ENCODE measurements at regions of chr11 and their contacts with region 1.

Region 1: GRCh38 chr11:65251476-65251875 is 10.3 kb upstream of the POLA2 start:
- DNase-seq: no peak
- ATAC-seq: no peak
- H3K4me3 ChIP-seq: no peak overlapping the region
- H3K27ac ChIP-seq: no peak overlapping the region
- H3K4me1 ChIP-seq: no peaks in the 10 kb centered on the region
- H3K27me3 ChIP-seq: no peaks in the 10 kb centered on the region
- CTCF ChIP-seq: no peak

Region 2: GRCh38 chr11:65134386-65135253 is 116.9 kb before region 1 on chr11 and contains the start of gene SYVN1:
- intact Hi-C with region 1: loop called in 2 of 10 experiments (anchors 10 kb)
- DNase-seq: peak; percentile 91 to 93
- ATAC-seq: peak; percentile 90 to 96 (median 94)
- H3K4me3 ChIP-seq: peak within 1 kb of the TSS; percentile 75 to 98 (median 88)
- H3K27ac ChIP-seq: peak within 1 kb of the TSS; percentile 95 to 100 (median 98)
- H3K4me1 ChIP-seq: peaks cover 12 to 36% (median 27%) of the 10 kb centered on the region in 9 donors
- H3K27me3 ChIP-seq: no peaks in the 10 kb centered on the region
- CTCF ChIP-seq: no peak
- total RNA-seq, gene SYVN1: 24.1 to 34.0 (median 27.8) TPM

Region 3: DNA sequence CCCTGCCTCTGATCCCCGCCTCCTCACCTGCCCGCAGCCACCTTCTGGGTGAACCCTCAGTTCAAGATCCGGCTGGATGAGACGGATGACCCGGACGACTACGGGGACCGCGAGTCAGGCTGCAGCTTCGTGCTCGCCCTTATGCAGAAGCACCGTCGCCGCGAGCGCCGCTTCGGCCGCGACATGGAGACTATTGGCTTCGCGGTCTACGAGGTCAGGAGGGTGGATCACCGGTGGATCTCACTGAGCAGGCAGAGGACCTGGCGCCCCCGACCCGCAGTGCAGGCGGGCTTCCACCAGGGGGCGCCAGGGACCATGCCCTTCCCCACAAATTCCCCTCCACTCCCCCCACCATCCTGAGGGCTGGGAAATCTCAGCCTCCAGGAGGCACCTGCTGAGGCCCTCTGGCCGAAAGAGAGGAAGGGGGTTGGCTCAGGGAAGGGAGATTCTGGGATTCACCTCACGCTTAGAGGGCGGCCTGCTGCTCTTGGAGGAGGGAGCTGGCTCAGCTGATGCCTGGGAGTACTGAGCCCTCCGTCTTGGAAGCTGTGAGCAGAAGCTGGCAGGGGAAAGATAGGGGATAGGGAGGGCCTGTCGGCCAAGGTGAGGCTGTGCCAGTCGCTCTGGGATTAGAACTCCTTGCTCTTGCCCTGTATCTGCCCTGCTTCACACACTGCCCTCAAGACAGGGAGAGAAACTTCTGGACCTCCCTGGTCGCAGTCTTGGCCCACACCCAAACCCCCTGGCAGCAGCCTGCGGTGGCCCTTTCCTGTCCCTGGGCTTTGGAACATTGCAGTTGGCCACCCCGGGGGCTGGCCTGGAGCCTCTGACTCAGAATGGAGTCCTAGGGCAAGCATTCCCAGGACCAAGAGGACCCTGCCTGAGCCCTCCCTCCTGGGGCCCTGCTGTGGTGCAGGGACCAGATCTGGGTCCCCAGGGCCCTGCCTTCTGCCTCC is 46.6 kb before region 1 on chr11:
- intact Hi-C with region 1: loop called in 1 of 10 experiments (anchors 10 kb)
- DNase-seq: no peak
- ATAC-seq: peak in 7 of 8 donors; percentile 18 to 68 (median 43)
- H3K4me3 ChIP-seq: no peak overlapping the region
- H3K27ac ChIP-seq: no peak overlapping the region
- H3K4me1 ChIP-seq: peaks cover 0 to 3% (median 0%) of the 10 kb centered on the region in 9 donors
- H3K27me3 ChIP-seq: no peaks in the 10 kb centered on the region
- CTCF ChIP-seq: peak; percentile 62 to 96 (median 78)